ENCODE measurements at regions of chr17 and their contacts with region 1.

Region 1: GRCh38 chr17:42221937-42222745 is 27.8 kb upstream of the GHDC start:
- DNase-seq: peak; percentile 77
- H3K4me3 ChIP-seq: no peak overlapping the region; a peak in 1 of 4 replicates
- H3K27ac ChIP-seq: no peak overlapping the region
- H3K4me1 ChIP-seq: no peaks in the 10 kb centered on the region
- H3K27me3 ChIP-seq: no peaks in the 10 kb centered on the region
- CTCF ChIP-seq: peak; percentile 77
- EP300 ChIP-seq: no peak
- RAD21 ChIP-seq: peak; percentile 77

Region 2: GRCh38 chr17:42200702-42201101 is 21.4 kb before region 1 on chr17:
- CTCF ChIA-PET with region 1: interaction called, 10 read pairs
- POLR2A ChIA-PET with region 1: no interaction called
- DNase-seq: peak; percentile 82
- H3K4me3 ChIP-seq: no peak overlapping the region
- H3K27ac ChIP-seq: peak overlapping the region in 1 of 2 experiments; percentile 83; a peak in 2 of 4 replicates
- H3K4me1 ChIP-seq: peaks cover 0 to 12% of the 10 kb centered on the region in 2 experiments; a peak in 1 of 4 replicates
- H3K27me3 ChIP-seq: no peaks in the 10 kb centered on the region
- CTCF ChIP-seq: no peak
- EP300 ChIP-seq: no peak
- RAD21 ChIP-seq: no peak

Region 3: DNA sequence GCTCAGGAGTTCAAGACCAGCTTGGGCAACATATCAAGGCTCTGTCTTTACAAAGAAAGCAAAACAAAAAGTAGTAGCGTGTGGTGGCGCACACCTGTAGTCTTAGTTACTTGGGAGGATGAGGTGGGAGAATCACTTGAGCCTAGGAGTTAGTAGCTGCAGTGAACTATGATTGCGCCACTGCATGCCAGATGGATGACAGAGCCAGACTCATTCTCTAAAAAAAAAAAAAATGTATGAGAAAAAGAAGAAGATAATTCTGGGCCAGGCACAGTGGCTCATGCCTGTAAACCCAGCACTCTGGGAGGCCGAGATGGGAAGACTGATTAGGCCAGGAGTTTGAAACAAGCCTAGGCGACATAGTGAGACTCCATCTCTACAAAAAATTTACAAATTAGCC is 25.6 kb after region 1 on chr17:
- CTCF ChIA-PET with region 1: interaction called, 10 read pairs
- POLR2A ChIA-PET with region 1: interaction called, 3 read pairs
- DNase-seq: no peak
- H3K4me3 ChIP-seq: no peak overlapping the region
- H3K27ac ChIP-seq: peak overlapping the region; percentile 73 to 94
- H3K4me1 ChIP-seq: peaks cover 5 to 8% of the 10 kb centered on the region in 2 experiments; a peak in 3 of 4 replicates
- H3K27me3 ChIP-seq: no peaks in the 10 kb centered on the region
- CTCF ChIP-seq: no peak
- EP300 ChIP-seq: no peak
- RAD21 ChIP-seq: no peak

Region 4: GRCh38 chr17:42291129-42291528 is 69.0 kb after region 1 on chr17:
- CTCF ChIA-PET with region 1: interaction called, 11 read pairs
- POLR2A ChIA-PET with region 1: no interaction called
- DNase-seq: no peak
- H3K4me3 ChIP-seq: no peak overlapping the region
- H3K27ac ChIP-seq: no peak overlapping the region
- H3K4me1 ChIP-seq: peaks cover 0 to 7% of the 10 kb centered on the region in 2 experiments; a peak in 1 of 4 replicates
- H3K27me3 ChIP-seq: no peaks in the 10 kb centered on the region
- CTCF ChIP-seq: no peak
- EP300 ChIP-seq: no peak
- RAD21 ChIP-seq: no peak

Region 5: GRCh38 chr17:42312285-42313130 is 90.4 kb after region 1 on chr17:
- CTCF ChIA-PET with region 1: interaction called, 34 read pairs
- POLR2A ChIA-PET with region 1: no interaction called
- DNase-seq: peak; percentile 93
- H3K4me3 ChIP-seq: no peak overlapping the region; a peak in 1 of 4 replicates
- H3K27ac ChIP-seq: peak overlapping the region in 1 of 2 experiments; percentile 51; a peak in 2 of 4 replicates
- H3K4me1 ChIP-seq: peaks cover 0 to 15% of the 10 kb centered on the region in 2 experiments; a peak in 2 of 4 replicates
- H3K27me3 ChIP-seq: no peaks in the 10 kb centered on the region
- CTCF ChIP-seq: peak; percentile 65
- EP300 ChIP-seq: peak in 1 of 2 experiments; percentile 2; a peak in 1 of 4 replicates
- RAD21 ChIP-seq: peak; percentile 70

Region 6: GRCh38 chr17:42322382-42323267 is 100.5 kb after region 1 on chr17:
- CTCF ChIA-PET with region 1: interaction called, 10 read pairs
- POLR2A ChIA-PET with region 1: no interaction called
- DNase-seq: peak; percentile 90
- H3K4me3 ChIP-seq: no peak overlapping the region; a peak in 1 of 4 replicates
- H3K27ac ChIP-seq: no peak overlapping the region
- H3K4me1 ChIP-seq: peaks cover 6 to 27% of the 10 kb centered on the region in 2 experiments; a peak in 3 of 4 replicates
- H3K27me3 ChIP-seq: no peaks in the 10 kb centered on the region
- CTCF ChIP-seq: peak; percentile 99
- EP300 ChIP-seq: no peak
- RAD21 ChIP-seq: peak; percentile 99

Region 7: DNA sequence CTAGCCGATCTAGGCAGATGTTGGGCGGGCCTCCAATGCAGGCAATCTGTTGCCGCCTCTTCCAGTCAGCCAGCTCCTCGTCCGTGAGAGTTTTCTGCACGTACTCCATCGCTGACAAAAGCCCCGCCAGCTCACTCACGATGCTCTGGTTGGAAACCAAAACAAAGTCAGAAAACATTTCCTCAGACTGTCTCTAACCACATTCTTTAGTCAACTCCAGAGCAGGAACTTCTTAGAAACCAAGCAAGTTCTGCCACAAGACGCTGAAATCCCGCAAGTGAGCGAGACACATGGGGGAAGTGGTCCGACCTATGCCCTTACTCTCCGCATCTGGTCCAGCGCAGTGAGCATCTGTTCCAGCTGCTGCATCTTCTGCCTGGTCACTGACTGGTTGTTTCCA is 115.3 kb after region 1 on chr17:
- CTCF ChIA-PET with region 1: no interaction called
- POLR2A ChIA-PET with region 1: no interaction called
- DNase-seq: no peak
- H3K4me3 ChIP-seq: no peak overlapping the region
- H3K27ac ChIP-seq: no peak overlapping the region
- H3K4me1 ChIP-seq: no peaks in the 10 kb centered on the region
- H3K27me3 ChIP-seq: no peaks in the 10 kb centered on the region
- CTCF ChIP-seq: no peak
- EP300 ChIP-seq: no peak
- RAD21 ChIP-seq: no peak

Region 8: DNA sequence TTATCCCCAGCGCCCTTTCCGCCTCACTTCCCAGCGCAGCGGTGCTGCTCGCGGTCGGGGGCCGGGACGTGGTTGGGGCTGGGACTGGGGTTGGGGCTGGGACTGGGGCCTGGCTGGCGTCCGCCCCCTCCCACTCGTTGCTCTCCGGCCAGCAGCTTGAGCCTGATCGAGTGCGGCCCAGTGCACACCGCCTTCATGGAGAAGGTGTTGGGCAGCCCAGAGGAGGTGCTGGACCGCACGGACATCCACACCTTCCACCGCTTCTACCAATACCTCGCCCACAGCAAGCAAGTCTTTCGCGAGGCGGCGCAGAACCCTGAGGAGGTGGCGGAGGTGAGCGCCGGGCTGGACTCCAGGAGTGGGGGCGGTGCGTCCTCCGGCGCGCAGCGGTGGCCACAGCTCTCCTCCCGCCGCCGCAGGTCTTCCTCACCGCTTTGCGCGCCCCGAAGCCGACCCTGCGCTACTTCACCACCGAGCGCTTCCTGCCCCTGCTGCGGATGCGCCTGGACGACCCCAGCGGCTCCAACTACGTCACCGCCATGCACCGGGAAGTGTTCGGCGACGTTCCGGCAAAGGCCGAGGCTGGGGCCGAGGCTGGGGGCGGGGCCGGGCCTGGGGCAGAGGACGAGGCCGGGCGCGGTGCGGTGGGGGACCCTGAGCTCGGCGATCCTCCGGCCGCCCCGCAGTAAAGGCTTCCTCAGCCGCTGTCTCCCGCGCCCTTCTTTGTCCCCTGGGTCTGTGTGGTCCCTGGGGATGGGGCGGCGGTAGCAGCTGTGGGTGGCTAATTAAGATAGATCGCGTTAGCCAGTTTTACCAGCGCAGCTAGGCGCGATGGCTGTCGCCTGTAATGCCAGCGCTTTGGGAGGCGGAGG is 332.3 kb after region 1 on chr17:
- CTCF ChIA-PET with region 1: no interaction called
- POLR2A ChIA-PET with region 1: no interaction called
- DNase-seq: peak; percentile 96
- H3K4me3 ChIP-seq: peak overlapping the region; percentile 79 to 89
- H3K27ac ChIP-seq: peak overlapping the region; percentile 69 to 74
- H3K4me1 ChIP-seq: peaks cover 2 to 20% of the 10 kb centered on the region in 2 experiments; a peak in 1 of 4 replicates
- H3K27me3 ChIP-seq: no peaks in the 10 kb centered on the region
- CTCF ChIP-seq: no peak
- EP300 ChIP-seq: no peak
- RAD21 ChIP-seq: no peak